ENCODE measurements at regions of chr2 and their contacts with region 1.

Region 1: GRCh38 chr2:200811336-200812121 is at the start of gene BZW1:
- DNase-seq: peak; percentile 99
- H3K4me3 ChIP-seq: peak within 1 kb of the TSS; percentile 98
- H3K27ac ChIP-seq: peak within 1 kb of the TSS; percentile 99
- H3K4me1 ChIP-seq: no peaks in the 10 kb centered on the region
- H3K27me3 ChIP-seq: no peaks in the 10 kb centered on the region
- CTCF ChIP-seq: no peak
- total RNA-seq, gene BZW1: 253 to 257 TPM

Region 2: GRCh38 chr2:200713003-200713703 is 98.4 kb before region 1 on chr2:
- intact Hi-C with region 1: loop called (anchors 5 kb)
- DNase-seq: peak; percentile 93
- H3K4me3 ChIP-seq: peak overlapping the region; percentile 6
- H3K27ac ChIP-seq: peak overlapping the region; percentile 65
- H3K4me1 ChIP-seq: no peaks in the 10 kb centered on the region
- H3K27me3 ChIP-seq: no peaks in the 10 kb centered on the region
- CTCF ChIP-seq: peak; percentile 61

Region 3: GRCh38 chr2:200856806-200857205 is 45.3 kb after region 1 on chr2:
- intact Hi-C with region 1: loop called (anchors 2 kb)
- DNase-seq: no peak
- H3K4me3 ChIP-seq: no peak overlapping the region
- H3K27ac ChIP-seq: no peak overlapping the region
- H3K4me1 ChIP-seq: peaks cover 7% of the 10 kb centered on the region
- H3K27me3 ChIP-seq: no peaks in the 10 kb centered on the region
- CTCF ChIP-seq: no peak

Measured in colonic mucosa (tissue), 4 donors.